Dorsolateral prefrontal cortex (tissue), 120 donors: ENCODE measurements at regions of chr2 and their contacts with region 1.

Region 1: DNA sequence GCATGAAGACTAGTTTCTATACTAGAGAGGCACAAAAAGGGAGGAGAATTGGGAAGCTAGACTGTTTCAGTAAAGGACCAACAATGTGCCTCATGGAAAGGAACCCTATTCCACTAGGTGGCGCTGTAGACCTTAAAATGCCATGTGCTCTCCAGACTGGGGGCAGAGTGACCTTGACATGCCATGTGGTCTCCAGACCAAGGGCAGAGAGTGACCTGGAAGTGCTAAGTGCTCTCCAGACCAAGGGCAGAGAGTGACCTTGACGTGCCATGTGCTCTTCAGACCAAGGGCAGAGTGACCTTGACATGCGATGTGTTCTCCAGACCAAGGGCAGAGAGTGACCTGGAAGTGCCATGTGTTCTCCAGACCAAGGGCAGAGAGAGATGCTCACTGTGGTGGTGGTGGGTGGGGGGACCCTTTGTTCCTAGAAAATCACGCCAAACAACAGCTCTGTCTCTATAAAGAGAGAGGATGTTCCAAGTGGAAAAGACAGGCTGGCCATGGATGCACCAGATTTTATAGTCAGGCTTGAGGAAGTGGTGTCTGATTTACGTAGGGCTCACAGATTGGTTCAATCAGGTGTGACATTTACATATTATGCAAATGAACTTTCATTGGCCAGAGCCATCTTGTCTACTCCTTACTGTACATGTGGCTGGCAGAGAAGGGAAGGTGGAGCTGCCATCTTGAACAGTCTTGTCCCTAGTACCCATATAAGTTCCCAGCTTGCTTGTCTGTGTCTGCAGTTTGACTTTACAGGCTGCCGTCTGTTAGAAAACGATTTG is 344.0 kb upstream of the DDX18 start:
- DNase-seq: no peak
- H3K4me3 ChIP-seq: no peak overlapping the region
- H3K27ac ChIP-seq: no peak overlapping the region
- H3K27me3 ChIP-seq: peaks cover 0 to 4% (median 0%) of the 10 kb centered on the region in 45 donors
- CTCF ChIP-seq: peak in 55 of 56 donors; percentile 20 to 70 (median 49)

Region 2: DNA sequence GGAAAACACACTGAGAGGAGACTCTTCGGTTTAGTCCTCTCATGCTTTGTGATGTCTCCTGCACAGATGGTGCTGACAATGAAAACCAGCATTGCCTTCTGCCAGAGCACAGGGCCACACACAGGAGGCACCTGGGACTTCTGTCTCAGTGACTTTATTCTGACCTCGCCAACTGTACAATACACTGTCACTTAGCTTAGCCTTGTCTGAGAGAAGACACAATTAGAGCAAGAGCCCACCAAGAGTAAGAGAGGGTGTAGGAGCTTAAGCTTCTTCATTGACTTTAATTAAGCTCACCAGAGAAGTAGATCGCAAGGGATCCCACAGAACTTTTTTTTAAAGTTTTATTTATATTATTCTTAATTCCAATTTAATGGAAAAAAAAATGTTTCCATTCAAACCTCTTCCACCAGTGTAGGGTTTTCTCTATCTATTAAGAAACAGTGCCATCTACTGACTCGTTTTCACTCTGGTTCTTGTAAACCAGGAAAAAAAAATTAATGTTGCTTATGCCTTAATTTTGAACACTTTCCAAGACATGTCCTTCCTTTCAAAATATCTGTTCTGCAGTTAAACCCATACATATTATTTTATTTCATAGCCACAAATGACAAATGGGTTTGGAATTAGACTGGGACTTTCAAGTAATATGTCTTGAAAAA is 301.6 kb after region 1 on chr2:
- intact Hi-C with region 1: loop called (anchors 10 kb)
- DNase-seq: no peak
- H3K4me3 ChIP-seq: no peak overlapping the region
- H3K27ac ChIP-seq: no peak overlapping the region
- H3K27me3 ChIP-seq: peaks cover 0 to 6% (median 0%) of the 10 kb centered on the region in 45 donors
- CTCF ChIP-seq: peak; percentile 30 to 76 (median 56)